Activated CD8-positive, alpha-beta T cell treated with anti-CD3 and anti-CD28 coated beads for 36 hours (primary cell): ENCODE measurements at regions of chr4 and their contacts with region 1.

Region 1: DNA sequence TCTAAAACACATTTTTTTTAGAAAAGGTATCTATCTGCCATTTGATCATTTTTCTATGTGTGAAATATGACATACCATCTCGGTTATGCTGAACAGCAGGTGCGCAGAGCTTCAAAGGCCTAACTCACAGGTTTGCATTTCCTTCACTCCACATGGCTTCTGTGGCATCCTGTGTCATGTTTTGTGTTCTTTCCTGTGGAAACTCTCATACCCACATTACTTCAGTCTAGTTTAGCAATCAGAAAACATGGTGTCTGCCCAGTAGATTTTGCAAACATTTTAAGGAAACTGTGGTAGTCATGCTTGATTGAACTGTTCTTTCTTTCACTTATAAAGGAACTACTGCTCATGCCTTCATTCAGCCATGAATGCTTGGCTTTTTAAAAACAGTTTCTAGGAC is 11.3 kb upstream of the ARAP2 start:
- DNase-seq: peak; percentile 81
- ATAC-seq: peak; percentile 80
- H3K4me3 Mint-ChIP-seq: peak overlapping the region; percentile 66
- H3K27ac Mint-ChIP-seq: peak overlapping the region; percentile 94
- H3K4me1 Mint-ChIP-seq: peaks cover 46% of the 10 kb centered on the region
- H3K27me3 Mint-ChIP-seq: no peaks in the 10 kb centered on the region
- CTCF ChIP-seq: no peak

Region 2: GRCh38 chr4:36269101-36269500 is 13.5 kb after region 1 on chr4:
- CTCF ChIA-PET with region 1: interaction called, 24 read pairs
- POLR2A ChIA-PET with region 1: interaction called, 6 read pairs
- intact Hi-C with region 1: no loop called
- DNase-seq: peak; percentile 79
- ATAC-seq: peak; percentile 88
- H3K4me3 Mint-ChIP-seq: no peak overlapping the region
- H3K27ac Mint-ChIP-seq: peak overlapping the region; percentile 79
- H3K4me1 Mint-ChIP-seq: peaks cover 53% of the 10 kb centered on the region
- H3K27me3 Mint-ChIP-seq: no peaks in the 10 kb centered on the region
- CTCF ChIP-seq: no peak

Region 3: DNA sequence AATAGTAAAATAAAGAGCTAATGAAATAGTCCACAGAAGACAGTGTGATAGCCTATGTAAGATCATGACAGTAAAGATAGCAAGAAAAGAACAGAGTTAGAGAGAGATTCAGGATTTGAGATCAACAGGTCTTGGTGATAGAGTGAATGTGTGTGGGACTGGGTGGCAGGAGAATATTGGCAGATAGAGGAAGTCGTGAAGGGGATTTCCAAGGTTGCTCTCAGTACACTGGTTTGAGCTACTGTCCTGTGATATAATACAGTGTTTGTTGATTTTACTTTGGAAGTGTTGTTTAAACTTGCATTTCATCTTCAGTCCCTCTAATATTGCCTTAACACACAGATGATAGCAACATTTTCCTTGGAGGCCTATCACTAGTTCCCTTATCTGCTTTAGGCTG is 69.9 kb after region 1 on chr4:
- CTCF ChIA-PET with region 1: no interaction called
- POLR2A ChIA-PET with region 1: interaction called, 3 read pairs
- intact Hi-C with region 1: loop called (anchors 2 kb)
- DNase-seq: no peak
- ATAC-seq: peak; percentile 51
- H3K4me3 Mint-ChIP-seq: peak overlapping the region; percentile 5
- H3K27ac Mint-ChIP-seq: peak overlapping the region; percentile 74
- H3K4me1 Mint-ChIP-seq: peaks cover 62% of the 10 kb centered on the region
- H3K27me3 Mint-ChIP-seq: no peaks in the 10 kb centered on the region
- CTCF ChIP-seq: no peak